ENCODE measurements at regions of chr17 and their contacts with region 1.

Region 1: GRCh38 chr17:47895856-47896671 is at the start of gene SP2:
- DNase-seq: peak; percentile 100
- H3K4me3 ChIP-seq: peak within 1 kb of the TSS; percentile 90
- H3K27ac ChIP-seq: peak within 1 kb of the TSS; percentile 58
- H3K4me1 ChIP-seq: peaks cover 29% of the 10 kb centered on the region
- CTCF ChIP-seq: no peak
- total RNA-seq, gene SP2: 2.3 and 5.8 TPM in 2 replicates

Region 2: GRCh38 chr17:47840740-47841603 is 55.1 kb before region 1 on chr17 and contains the start of gene SCRN2:
- CTCF ChIA-PET with region 1: interaction called, 5 read pairs
- POLR2A ChIA-PET with region 1: interaction called, 13 read pairs
- intact Hi-C with region 1: no loop called
- DNase-seq: peak; percentile 88
- H3K4me3 ChIP-seq: peak within 1 kb of the TSS; percentile 78
- H3K27ac ChIP-seq: no peak within 1 kb of the TSS
- H3K4me1 ChIP-seq: peaks cover 37% of the 10 kb centered on the region
- CTCF ChIP-seq: peak; percentile 88
- total RNA-seq, gene SCRN2: 33.9 and 42.9 TPM in 2 replicates

Region 3: GRCh38 chr17:47907932-47908562 is 12.0 kb after region 1 on chr17:
- CTCF ChIA-PET with region 1: no interaction called
- POLR2A ChIA-PET with region 1: no interaction called
- intact Hi-C with region 1: no loop called
- DNase-seq: no peak
- H3K4me3 ChIP-seq: no peak overlapping the region
- H3K27ac ChIP-seq: no peak overlapping the region
- H3K4me1 ChIP-seq: no peaks in the 10 kb centered on the region
- CTCF ChIP-seq: no peak

Region 4: DNA sequence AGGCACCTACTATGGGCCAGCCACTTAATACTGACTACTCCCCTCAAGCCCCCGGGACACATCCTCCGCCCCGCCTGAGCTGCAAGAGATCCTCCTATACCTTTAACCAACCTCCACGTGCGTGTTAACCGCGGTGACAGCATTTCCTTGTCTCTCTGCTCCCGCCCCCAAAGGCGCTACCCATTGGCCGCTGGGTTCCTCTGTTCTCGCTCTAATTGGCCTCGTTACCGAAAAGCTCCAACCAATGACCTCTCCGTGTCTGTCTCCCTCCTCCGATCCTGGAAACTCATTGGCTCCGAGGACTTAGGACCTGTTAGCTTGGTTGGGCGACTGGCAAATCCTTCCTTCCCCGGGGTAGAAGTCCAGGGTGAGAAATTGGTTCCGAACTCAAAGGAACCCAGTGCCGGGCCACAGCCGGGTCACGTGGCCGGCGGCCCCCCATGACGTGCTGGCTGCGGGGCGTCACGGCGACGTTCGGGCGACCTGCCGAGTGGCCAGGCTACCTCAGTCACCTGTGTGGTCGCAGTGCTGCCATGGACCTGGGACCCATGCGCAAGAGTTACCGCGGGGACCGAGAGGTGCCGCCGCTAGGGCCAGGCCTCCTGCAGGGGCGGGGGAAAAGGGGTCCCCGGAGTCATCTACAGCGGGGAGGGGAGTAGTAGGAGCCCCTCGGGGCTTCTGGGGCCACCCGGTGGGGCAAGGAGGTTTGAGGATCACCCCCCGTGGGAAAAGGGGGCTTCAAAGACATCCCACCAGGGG is 45.4 kb after region 1 on chr17 and contains the start of gene PNPO:
- CTCF ChIA-PET with region 1: no interaction called
- POLR2A ChIA-PET with region 1: interaction called, 3 read pairs
- intact Hi-C with region 1: loop called (anchors 1 kb)
- DNase-seq: peak; percentile 97
- H3K4me3 ChIP-seq: peak within 1 kb of the TSS; percentile 84
- H3K27ac ChIP-seq: peak within 1 kb of the TSS; percentile 41
- H3K4me1 ChIP-seq: peaks cover 44% of the 10 kb centered on the region
- CTCF ChIP-seq: peak; percentile 16; the same call in 1 of the 2 replicates
- total RNA-seq, gene PNPO: 14.0 and 14.7 TPM in 2 replicates

Region 5: DNA sequence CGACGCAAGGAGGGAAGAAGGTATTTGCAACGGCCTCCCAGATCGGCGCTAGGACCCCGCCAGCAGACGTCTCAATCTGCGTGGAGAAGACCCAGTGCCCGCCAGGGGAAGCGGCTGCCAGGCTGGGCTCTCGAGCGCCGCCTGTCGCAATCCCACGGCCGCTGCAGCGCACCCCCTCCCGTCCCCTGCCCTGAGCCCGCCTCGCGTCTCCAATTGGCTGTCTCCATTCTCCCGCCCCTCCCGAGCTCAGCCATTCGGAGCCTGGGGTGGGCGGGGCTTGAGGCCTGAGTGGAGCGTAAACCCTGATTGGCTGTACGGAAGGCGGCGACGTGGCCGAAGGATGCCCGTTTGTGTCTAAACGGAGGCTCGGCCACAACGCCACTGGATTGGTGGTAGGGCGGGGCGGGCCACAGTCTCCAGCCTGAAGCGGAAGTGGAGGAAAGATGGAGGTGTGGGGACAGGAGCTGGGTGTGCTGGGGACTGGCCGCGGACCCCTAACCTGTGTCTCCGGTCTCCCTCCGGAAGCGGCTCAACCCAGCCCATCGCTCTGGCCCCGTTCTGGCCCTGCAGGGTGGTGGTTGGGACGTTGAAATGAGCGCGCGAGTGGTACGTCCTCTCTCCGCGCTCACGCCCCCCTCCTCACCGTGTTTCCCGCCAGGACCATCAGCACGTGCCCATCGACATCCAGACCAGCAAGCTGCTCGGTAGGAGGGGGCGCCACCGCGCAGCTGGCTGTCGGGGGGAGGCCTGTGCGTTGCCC is 74.8 kb after region 1 on chr17 and contains the start of gene CDK5RAP3:
- CTCF ChIA-PET with region 1: no interaction called
- POLR2A ChIA-PET with region 1: interaction called, 5 read pairs
- intact Hi-C with region 1: loop called (anchors 1 kb)
- DNase-seq: peak; percentile 100
- H3K4me3 ChIP-seq: peak within 1 kb of the TSS; percentile 83
- H3K27ac ChIP-seq: peak within 1 kb of the TSS; percentile 36
- H3K4me1 ChIP-seq: peaks cover 20% of the 10 kb centered on the region
- CTCF ChIP-seq: peak; percentile 85
- total RNA-seq, gene CDK5RAP3: 241 and 312 TPM in 2 replicates

Region 6: GRCh38 chr17:48011405-48012150 is 115.5 kb after region 1 on chr17:
- CTCF ChIA-PET with region 1: no interaction called
- POLR2A ChIA-PET with region 1: no interaction called
- intact Hi-C with region 1: loop called (anchors 5 kb)
- DNase-seq: peak; percentile 79
- H3K4me3 ChIP-seq: peak overlapping the region; percentile 66
- H3K27ac ChIP-seq: peak overlapping the region; percentile 7
- H3K4me1 ChIP-seq: peaks cover 19% of the 10 kb centered on the region
- CTCF ChIP-seq: peak; percentile 85

Region 7: GRCh38 chr17:48724251-48725003 is 828.4 kb after region 1 on chr17:
- CTCF ChIA-PET with region 1: no interaction called
- POLR2A ChIA-PET with region 1: no interaction called
- intact Hi-C with region 1: no loop called
- DNase-seq: peak; percentile 58
- H3K4me3 ChIP-seq: no peak overlapping the region
- H3K27ac ChIP-seq: no peak overlapping the region
- H3K4me1 ChIP-seq: no peaks in the 10 kb centered on the region
- CTCF ChIP-seq: peak; percentile 81